Esophagus muscularis mucosa (tissue), 4 donors: ENCODE measurements at regions of chr3 and their contacts with region 1.

Region 1: GRCh38 chr3:128426128-128426921 is 40.4 kb downstream of the DNAJB8 start:
- DNase-seq: no peak
- H3K4me3 ChIP-seq: peak overlapping the region; percentile 30 to 56 (median 44)
- H3K27ac ChIP-seq: no peak overlapping the region
- H3K4me1 ChIP-seq: peaks cover 3 to 12% (median 10%) of the 10 kb centered on the region in 4 donors
- H3K27me3 ChIP-seq: peaks cover 0 to 64% (median 10%) of the 10 kb centered on the region in 4 donors
- CTCF ChIP-seq: peak; percentile 83 to 98 (median 94)
- EP300 ChIP-seq: no peak
- POLR2A ChIP-seq: no peak

Region 2: GRCh38 chr3:128497387-128498126 is 71.2 kb after region 1 on chr3:
- intact Hi-C with region 1: loop called (anchors 2 kb)
- DNase-seq: no peak
- H3K4me3 ChIP-seq: peak overlapping the region; percentile 56 to 66 (median 60)
- H3K27ac ChIP-seq: no peak overlapping the region
- H3K4me1 ChIP-seq: peaks cover 16 to 39% (median 29%) of the 10 kb centered on the region in 4 donors
- H3K27me3 ChIP-seq: peaks cover 4 to 98% (median 53%) of the 10 kb centered on the region in 4 donors
- CTCF ChIP-seq: peak; percentile 54 to 80 (median 78)
- EP300 ChIP-seq: no peak
- POLR2A ChIP-seq: no peak

Region 3: GRCh38 chr3:128607710-128608048 is 181.4 kb after region 1 on chr3:
- intact Hi-C with region 1: loop called (anchors 2 kb)
- DNase-seq: no peak
- H3K4me3 ChIP-seq: peak overlapping the region; percentile 59 to 66 (median 62)
- H3K27ac ChIP-seq: peak overlapping the region; percentile 65 to 80 (median 74)
- H3K4me1 ChIP-seq: peaks cover 13 to 17% (median 16%) of the 10 kb centered on the region in 4 donors
- H3K27me3 ChIP-seq: peaks cover 0 to 7% (median 0%) of the 10 kb centered on the region in 4 donors
- CTCF ChIP-seq: no peak
- EP300 ChIP-seq: no peak
- POLR2A ChIP-seq: no peak